OCI-LY7 (cell line): ENCODE measurements at regions of chr16 and their contacts with region 1.

Region 1: GRCh38 chr16:56851671-56852400 is 13.2 kb upstream of the SLC12A3 start:
- DNase-seq: peak; percentile 65
- H3K4me3 ChIP-seq: no peak overlapping the region
- H3K27ac ChIP-seq: no peak overlapping the region
- H3K4me1 ChIP-seq: peaks cover 46% of the 10 kb centered on the region
- CTCF ChIP-seq: peak; percentile 85

Region 2: GRCh38 chr16:56793492-56793891 is 58.3 kb before region 1 on chr16:
- CTCF ChIA-PET with region 1: no interaction called
- POLR2A ChIA-PET with region 1: interaction called, 3 read pairs
- intact Hi-C with region 1: loop called (anchors 1 kb)
- DNase-seq: peak; percentile 52
- H3K4me3 ChIP-seq: no peak overlapping the region
- H3K27ac ChIP-seq: no peak overlapping the region
- H3K4me1 ChIP-seq: no peaks in the 10 kb centered on the region
- CTCF ChIP-seq: peak; percentile 77